A549 (cell line): ENCODE measurements at regions of chr15 and their contacts with region 1.

Region 1: DNA sequence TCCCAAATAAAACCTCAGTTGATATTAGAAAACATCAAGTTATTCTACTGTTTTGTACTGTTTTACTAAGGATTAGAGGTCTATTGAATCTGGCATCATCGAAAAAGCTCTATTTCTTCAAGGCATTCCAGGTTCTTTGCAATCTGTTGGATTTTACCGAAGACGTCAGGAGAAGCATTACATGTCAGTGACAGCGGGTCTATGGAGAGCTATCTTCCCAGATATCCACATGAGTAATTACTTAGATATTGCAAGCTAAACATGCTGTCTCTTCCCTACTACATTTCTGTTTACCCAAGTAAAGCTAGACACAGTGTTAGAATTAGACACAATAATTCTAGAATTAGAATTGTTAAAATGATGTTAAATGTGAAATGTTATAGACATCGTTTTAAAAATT is 10.8 kb upstream of the GOLGA6L2 start:
- DNase-seq: peak in 1 of 2 experiments; percentile 76
- ATAC-seq: peak; percentile 73 to 96; a peak in 5 of 6 replicates
- H3K4me3 ChIP-seq: no peak overlapping the region
- H3K27ac ChIP-seq: peak overlapping the region; percentile 13 to 53; a peak in 3 of 6 replicates
- H3K4me1 ChIP-seq: peaks cover 27% of the 10 kb centered on the region
- CTCF ChIP-seq: no peak
- EP300 ChIP-seq: no peak
- POLR2A ChIP-seq: no peak
- RAD21 ChIP-seq: no peak

Region 2: GRCh38 chr15:23397779-23398178 is 60.1 kb before region 1 on chr15:
- CTCF ChIA-PET with region 1: no interaction called
- POLR2A ChIA-PET with region 1: interaction called, 11 read pairs
- DNase-seq: no peak
- ATAC-seq: no peak
- H3K4me3 ChIP-seq: no peak overlapping the region
- H3K27ac ChIP-seq: no peak overlapping the region
- H3K4me1 ChIP-seq: peaks cover 18% of the 10 kb centered on the region
- CTCF ChIP-seq: no peak
- EP300 ChIP-seq: no peak
- POLR2A ChIP-seq: no peak
- RAD21 ChIP-seq: no peak